CD8-positive, alpha-beta T cell (primary cell): ENCODE measurements at regions of chr7 and their contacts with region 1.

Region 1: DNA sequence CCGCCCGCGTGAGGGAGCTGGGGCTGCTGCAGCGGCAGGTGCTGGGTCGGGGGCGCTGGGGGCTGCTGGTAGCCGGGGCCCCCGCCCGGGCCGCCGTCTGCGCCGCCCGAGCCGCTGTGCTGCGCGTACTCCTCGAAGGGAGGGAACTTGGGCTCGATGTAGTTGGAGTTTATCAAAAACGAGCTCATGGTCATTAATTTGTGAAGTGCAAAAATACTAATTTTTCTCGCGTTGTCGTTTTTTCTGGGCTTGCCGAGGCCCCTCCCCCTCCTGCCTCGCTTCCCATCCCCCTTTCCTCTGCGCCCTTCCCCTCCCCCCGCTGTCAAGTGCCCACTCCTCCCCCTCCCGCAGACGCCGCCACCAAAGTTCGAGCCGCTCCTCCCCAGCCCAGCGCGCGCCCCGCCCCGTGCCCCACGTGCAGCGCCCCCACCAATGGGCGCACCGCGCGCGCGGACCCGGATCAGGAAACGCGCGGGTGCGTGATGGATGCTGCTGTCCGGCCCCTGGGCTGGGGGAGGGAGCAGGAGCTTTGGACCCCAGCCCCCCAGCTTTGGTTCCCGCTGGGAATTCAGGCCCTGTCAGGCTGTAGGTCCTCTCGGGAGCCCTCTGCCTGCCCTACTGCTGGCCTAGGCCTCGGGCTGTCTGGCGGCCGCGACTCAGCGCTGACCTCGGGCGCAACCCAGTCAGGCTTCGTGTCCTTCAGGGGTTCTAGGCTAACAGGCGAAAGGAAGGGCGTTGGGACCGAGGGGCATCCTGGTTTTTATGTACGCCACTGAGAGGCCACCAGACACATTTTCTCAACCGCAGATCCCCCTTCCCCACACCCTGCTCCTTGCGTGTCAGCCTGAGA is at the start of gene HOXA4:
- DNase-seq: peak; percentile 50 to 86 (median 70)
- ATAC-seq: peak; percentile 94
- H3K4me3 ChIP-seq: peak within 1 kb of the TSS; percentile 49 to 84
- H3K4me3 Mint-ChIP-seq: peak within 1 kb of the TSS; percentile 63
- H3K27ac ChIP-seq: peak within 1 kb of the TSS in 1 of 2 experiments; percentile 58
- H3K27ac Mint-ChIP-seq: peak within 1 kb of the TSS; percentile 45
- H3K4me1 ChIP-seq: peaks cover 6% of the 10 kb centered on the region
- H3K4me1 Mint-ChIP-seq: peaks cover 7% of the 10 kb centered on the region
- H3K27me3 ChIP-seq: peaks cover 7 to 8% of the 10 kb centered on the region in 2 experiments
- H3K27me3 Mint-ChIP-seq: peaks cover 47% of the 10 kb centered on the region
- CTCF ChIP-seq: no peak
- total RNA-seq, gene HOXA4: 0.36 TPM in 1 of 2 experiments, not detected in the other

Region 2: GRCh38 chr7:26928703-26929347 is 201.9 kb before region 1 on chr7:
- CTCF ChIA-PET with region 1: no interaction called
- POLR2A ChIA-PET with region 1: no interaction called
- intact Hi-C with region 1: no loop called
- DNase-seq: no peak
- ATAC-seq: no peak
- H3K4me3 ChIP-seq: no peak overlapping the region
- H3K4me3 Mint-ChIP-seq: no peak overlapping the region
- H3K27ac ChIP-seq: no peak overlapping the region
- H3K27ac Mint-ChIP-seq: no peak overlapping the region
- H3K4me1 ChIP-seq: no peaks in the 10 kb centered on the region
- H3K4me1 Mint-ChIP-seq: no peaks in the 10 kb centered on the region
- H3K27me3 ChIP-seq: no peaks in the 10 kb centered on the region
- H3K27me3 Mint-ChIP-seq: peaks cover 14% of the 10 kb centered on the region
- CTCF ChIP-seq: no peak

Region 3: GRCh38 chr7:27095897-27096767 is 34.6 kb before region 1 on chr7 and contains the start of gene HOXA1:
- CTCF ChIA-PET with region 1: no interaction called
- POLR2A ChIA-PET with region 1: no interaction called
- intact Hi-C with region 1: loop called in 1 of 2 experiments (anchors 2 kb)
- DNase-seq: peak; percentile 44 to 90 (median 74)
- ATAC-seq: peak; percentile 91
- H3K4me3 ChIP-seq: peak within 1 kb of the TSS; percentile 76 to 80
- H3K4me3 Mint-ChIP-seq: peak within 1 kb of the TSS; percentile 90
- H3K27ac ChIP-seq: peak within 1 kb of the TSS; percentile 42 to 46
- H3K27ac Mint-ChIP-seq: peak within 1 kb of the TSS; percentile 82
- H3K4me1 ChIP-seq: peaks cover 21% of the 10 kb centered on the region
- H3K4me1 Mint-ChIP-seq: peaks cover 35% of the 10 kb centered on the region
- H3K27me3 ChIP-seq: peaks cover 0 to 15% of the 10 kb centered on the region in 2 experiments
- H3K27me3 Mint-ChIP-seq: peaks cover 42% of the 10 kb centered on the region
- CTCF ChIP-seq: no peak
- total RNA-seq, gene HOXA1: 0.79 to 0.83 TPM